ENCODE measurements at regions of chr22 and their contacts with region 1.

Region 1: DNA sequence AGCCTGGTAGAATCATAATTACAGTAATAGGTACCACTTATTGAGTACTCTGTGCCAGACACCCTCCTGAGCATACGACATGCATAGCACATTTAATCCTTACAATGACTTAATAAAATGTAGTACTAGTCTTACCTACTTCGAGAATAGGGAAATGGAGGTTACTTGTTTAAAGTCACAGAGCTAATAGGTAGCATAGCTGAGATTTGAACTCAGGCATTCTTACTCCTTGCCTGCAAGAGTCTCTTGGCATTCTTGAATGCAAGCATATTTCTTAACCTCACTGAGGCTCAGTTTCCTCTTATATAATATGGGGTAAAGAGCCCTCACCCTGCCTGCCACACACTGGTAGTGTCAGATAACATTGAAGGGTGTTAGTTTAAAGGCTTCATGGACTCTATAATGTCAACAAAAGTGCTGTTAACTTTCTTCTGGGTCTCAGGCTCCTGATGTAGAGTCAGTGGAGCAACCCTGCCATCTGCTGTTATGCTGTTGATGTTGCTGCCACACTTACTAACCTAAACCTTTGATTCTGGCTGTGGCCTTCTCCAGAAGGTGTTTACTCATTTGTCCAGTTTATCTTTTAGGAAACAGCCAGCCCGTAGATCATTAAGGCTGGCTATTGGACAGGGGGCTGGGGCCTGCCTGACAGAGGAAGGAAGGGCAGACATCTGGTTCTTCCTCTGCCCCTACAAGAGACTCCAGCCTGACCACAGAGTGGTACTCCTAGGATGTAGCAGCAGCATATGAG is 18.9 kb downstream of the LIMK2 start:
- DNase-seq: peak; percentile 23 to 83 (median 53)
- ATAC-seq: peak; percentile 75 to 92 (median 81)
- H3K4me3 ChIP-seq: no peak overlapping the region
- H3K4me3 Mint-ChIP-seq: peak overlapping the region in 1 of 3 donors; percentile 62
- H3K27ac ChIP-seq: peak overlapping the region; percentile 22
- H3K27ac Mint-ChIP-seq: peak overlapping the region; percentile 97
- H3K4me1 ChIP-seq: peaks cover 23 to 32% of the 10 kb centered on the region in 2 experiments
- H3K4me1 Mint-ChIP-seq: peaks cover 48 to 57% (median 52%) of the 10 kb centered on the region in 3 donors
- H3K27me3 ChIP-seq: no peaks in the 10 kb centered on the region
- H3K27me3 Mint-ChIP-seq: no peaks in the 10 kb centered on the region

Region 2: DNA sequence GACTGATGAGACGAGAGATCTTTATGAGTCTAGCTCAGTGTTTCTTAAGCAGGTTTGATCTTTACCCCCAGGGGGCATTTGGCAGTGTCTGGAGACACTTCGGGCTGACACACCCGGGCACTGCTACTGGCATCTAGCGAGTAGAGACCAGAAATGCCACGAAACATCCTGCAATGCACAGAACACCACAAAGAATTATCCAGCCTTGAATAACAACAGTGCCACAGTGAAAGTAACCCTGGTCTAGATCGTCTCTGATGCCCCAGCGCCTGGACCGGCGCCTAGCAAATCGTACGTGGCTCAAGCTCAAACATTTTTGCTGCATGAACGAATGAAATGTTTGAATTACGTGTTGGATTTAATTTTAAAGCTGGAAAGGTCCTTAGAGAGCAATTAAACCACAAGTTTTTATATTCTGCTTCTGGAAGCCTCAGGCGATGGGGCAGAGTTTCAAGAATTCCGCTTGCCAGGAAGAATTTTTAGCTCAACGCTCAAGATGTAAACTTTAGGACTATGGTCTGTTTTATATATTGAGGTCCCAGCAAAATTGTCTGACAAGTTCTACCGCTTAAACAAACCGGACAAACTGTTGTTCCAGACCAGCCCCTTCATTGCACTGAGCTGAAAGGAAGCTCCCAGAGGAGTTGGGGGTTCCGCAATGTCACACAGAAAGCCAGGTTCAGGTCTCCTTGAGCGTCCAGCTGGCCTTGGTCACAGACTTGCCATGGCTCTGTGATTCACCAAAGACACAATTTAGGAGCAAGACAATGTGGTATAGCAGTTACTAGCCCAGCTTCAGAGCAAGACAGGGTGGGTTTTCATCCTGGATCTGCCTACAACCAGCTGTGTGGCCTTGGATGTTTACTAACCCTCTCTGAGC is 194.1 kb before region 1 on chr22:
- CTCF ChIA-PET with region 1: no interaction called
- POLR2A ChIA-PET with region 1: no interaction called
- DNase-seq: peak in 3 of 35 experiments; percentile 0 to 8 (median 5)
- ATAC-seq: no peak
- H3K4me3 ChIP-seq: no peak overlapping the region
- H3K4me3 Mint-ChIP-seq: no peak overlapping the region
- H3K27ac ChIP-seq: no peak overlapping the region
- H3K27ac Mint-ChIP-seq: no peak overlapping the region
- H3K4me1 ChIP-seq: no peaks in the 10 kb centered on the region
- H3K4me1 Mint-ChIP-seq: no peaks in the 10 kb centered on the region
- H3K27me3 ChIP-seq: peaks cover 0 to 7% of the 10 kb centered on the region in 2 experiments
- H3K27me3 Mint-ChIP-seq: peaks cover 3 to 12% of the 10 kb centered on the region in 2 donors

Region 3: DNA sequence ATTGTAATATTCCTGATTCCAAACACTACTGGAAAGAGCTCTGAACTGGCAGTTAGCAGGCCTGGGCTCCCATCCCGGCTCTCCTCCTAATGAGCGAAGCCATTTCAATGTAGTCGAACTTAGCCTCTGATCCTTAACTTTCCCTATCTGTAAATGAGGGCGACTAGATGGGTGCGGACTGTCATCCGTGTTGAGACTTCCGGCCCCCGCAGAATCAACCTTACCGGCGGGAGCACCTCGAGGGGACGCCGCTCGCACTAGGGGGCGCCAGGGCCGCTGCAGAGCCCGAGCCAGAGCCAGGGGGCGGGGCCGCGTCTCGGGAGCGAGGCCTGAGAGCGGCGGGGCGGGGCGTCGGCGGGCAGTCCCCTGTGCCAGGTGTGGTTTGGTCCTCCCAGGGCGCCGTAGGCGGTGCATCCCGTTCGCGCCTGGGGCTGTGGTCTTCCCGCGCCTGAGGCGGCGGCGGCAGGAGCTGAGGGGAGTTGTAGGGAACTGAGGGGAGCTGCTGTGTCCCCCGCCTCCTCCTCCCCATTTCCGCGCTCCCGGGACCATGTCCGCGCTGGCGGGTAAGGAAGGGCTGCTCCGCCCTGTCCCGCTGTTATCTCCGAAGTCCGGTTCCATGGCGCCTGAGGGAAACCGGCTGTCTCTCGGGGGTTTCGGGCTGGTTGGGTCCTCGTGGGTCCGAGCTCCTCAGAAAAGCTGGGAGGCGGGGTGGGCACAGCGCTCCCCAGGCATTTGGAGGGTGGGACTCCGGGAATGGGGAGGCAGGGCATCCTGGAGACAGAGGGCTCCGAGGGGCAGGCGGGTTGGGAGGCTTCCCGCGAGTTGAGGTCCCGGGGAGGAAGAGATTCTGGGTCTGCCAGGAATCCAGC is 18.9 kb before region 1 on chr22 and contains the start of gene LIMK2:
- CTCF ChIA-PET with region 1: interaction called, 5 to 14 read pairs
- POLR2A ChIA-PET with region 1: interaction called in 1 of 2 experiments, 3 read pairs
- DNase-seq: peak; percentile 91 to 99 (median 96)
- ATAC-seq: peak; percentile 98 to 99 (median 98)
- H3K4me3 ChIP-seq: peak within 1 kb of the TSS; percentile 94 to 95
- H3K4me3 Mint-ChIP-seq: peak within 1 kb of the TSS; percentile 84 to 89 (median 86)
- H3K27ac ChIP-seq: peak within 1 kb of the TSS; percentile 82
- H3K27ac Mint-ChIP-seq: peak within 1 kb of the TSS; percentile 92 to 98
- H3K4me1 ChIP-seq: peaks cover 16 to 36% of the 10 kb centered on the region in 2 experiments
- H3K4me1 Mint-ChIP-seq: peaks cover 55 to 57% (median 56%) of the 10 kb centered on the region in 3 donors
- H3K27me3 ChIP-seq: no peaks in the 10 kb centered on the region
- H3K27me3 Mint-ChIP-seq: no peaks in the 10 kb centered on the region
- total RNA-seq, gene LIMK2: 21.5 to 31.5 (median 29.7) TPM

Measured in T-cell (primary cell).